Activated CD4-positive, alpha-beta memory T cell treated with anti-CD3 and anti-CD28 coated beads for 36 hours (primary cell): ENCODE measurements at regions of chr2 and their contacts with region 1.

Region 1: GRCh38 chr2:37877457-37878315 is 47.4 kb upstream of the RMDN2 start:
- DNase-seq: no peak
- H3K4me3 Mint-ChIP-seq: no peak overlapping the region
- H3K27ac Mint-ChIP-seq: no peak overlapping the region
- H3K4me1 Mint-ChIP-seq: peaks cover 7% of the 10 kb centered on the region
- H3K27me3 Mint-ChIP-seq: peaks cover 16% of the 10 kb centered on the region

Region 2: DNA sequence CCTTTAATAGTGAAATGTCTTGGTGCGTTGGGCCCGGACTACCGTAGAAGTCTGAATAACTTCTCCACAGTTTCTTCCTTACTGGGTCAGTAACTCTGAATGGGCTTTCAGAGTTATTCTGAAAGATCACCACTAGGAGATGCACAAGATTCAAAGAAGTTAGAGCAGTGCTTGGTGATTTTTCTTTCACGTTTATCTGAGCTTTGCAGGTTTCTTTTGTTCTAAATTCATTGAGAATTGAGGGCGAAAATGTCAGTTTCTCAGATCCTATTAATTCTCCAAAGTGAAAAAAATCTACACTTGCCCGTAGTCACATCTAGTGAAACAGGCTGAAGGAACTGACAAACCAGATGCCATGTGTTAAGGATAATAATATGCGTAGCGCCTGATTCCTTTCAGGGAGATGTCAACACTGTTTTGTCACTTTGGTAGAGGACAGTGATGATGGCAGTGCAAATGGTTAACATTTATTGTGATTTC is 463.2 kb before region 1 on chr2:
- CTCF ChIA-PET with region 1: interaction called, 159 read pairs
- POLR2A ChIA-PET with region 1: no interaction called
- intact Hi-C with region 1: loop called (anchors 1 kb)
- DNase-seq: no peak
- H3K4me3 Mint-ChIP-seq: no peak overlapping the region
- H3K27ac Mint-ChIP-seq: no peak overlapping the region
- H3K4me1 Mint-ChIP-seq: peaks cover 6% of the 10 kb centered on the region
- H3K27me3 Mint-ChIP-seq: no peaks in the 10 kb centered on the region

Region 3: DNA sequence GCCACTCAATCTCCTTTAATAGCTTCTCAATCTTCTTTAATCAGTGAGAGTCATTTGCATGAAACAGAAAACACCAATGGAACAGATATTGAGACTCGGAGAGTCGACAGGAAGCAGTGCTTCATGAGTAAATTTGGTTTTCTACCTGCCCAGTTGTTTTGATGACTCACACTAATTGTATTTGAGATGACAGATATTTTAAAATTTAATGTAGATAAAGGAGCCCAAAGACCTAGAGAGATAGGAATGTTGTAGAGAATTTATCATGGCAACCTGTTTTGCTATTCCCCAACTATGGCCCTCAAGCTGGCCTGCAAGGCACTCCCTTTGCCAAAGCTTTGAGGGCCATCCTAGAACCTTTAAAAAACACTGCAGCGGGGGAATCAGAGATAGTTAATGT is 325.3 kb before region 1 on chr2:
- CTCF ChIA-PET with region 1: interaction called, 5 read pairs
- POLR2A ChIA-PET with region 1: no interaction called
- intact Hi-C with region 1: loop called (anchors 2 kb)
- DNase-seq: no peak
- H3K4me3 Mint-ChIP-seq: no peak overlapping the region
- H3K27ac Mint-ChIP-seq: no peak overlapping the region
- H3K4me1 Mint-ChIP-seq: peaks cover 16% of the 10 kb centered on the region
- H3K27me3 Mint-ChIP-seq: no peaks in the 10 kb centered on the region

Region 4: DNA sequence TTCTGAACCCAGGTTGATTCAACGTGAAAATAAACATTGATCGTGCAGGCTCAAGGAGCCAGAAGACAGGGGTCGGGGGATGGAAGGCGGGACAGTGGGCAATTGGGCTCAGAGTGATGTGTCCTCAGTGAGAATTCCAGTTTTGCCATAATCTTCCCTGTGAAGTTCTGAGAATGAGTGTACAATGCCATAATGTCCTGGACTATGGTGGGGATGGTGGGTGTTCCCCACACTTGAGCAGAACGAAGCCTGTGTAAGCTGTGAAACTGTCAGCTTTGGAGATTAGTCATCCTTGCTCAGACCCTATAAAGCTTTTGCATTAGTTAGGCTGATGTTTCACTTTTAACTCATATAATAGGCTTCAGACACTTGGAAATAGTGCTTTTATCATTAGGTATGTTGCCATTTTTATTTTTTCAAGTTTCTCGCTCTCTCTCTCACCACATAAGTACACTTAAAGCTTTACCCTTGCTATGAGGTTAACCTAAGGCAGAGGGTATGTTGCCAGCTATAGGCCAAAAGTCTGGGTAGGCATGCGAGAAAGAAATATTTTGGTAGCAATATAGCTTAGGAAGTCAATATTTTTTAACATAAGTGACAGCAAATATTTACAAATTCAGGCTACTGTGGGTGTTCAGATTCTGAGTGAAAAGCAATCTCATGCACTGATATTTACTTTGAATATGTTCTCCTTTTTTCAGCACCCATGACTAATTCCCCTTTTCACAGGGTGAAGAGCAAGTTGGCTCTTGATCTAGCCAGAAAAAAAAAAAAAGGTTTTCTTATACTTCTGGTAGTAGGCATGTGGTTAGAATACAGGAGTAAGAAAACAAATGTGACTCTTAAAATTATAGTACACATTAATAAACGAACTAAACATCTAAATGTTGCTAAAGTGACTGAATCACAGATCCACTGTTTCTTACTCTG is 253.4 kb before region 1 on chr2:
- CTCF ChIA-PET with region 1: interaction called, 16 read pairs
- POLR2A ChIA-PET with region 1: no interaction called
- intact Hi-C with region 1: no loop called
- DNase-seq: peak; percentile 50
- H3K4me3 Mint-ChIP-seq: peak overlapping the region; percentile 45
- H3K27ac Mint-ChIP-seq: peak overlapping the region; percentile 83
- H3K4me1 Mint-ChIP-seq: peaks cover 80% of the 10 kb centered on the region
- H3K27me3 Mint-ChIP-seq: no peaks in the 10 kb centered on the region

Region 5: GRCh38 chr2:37832590-37833197 is 45.0 kb before region 1 on chr2:
- CTCF ChIA-PET with region 1: interaction called, 175 read pairs
- POLR2A ChIA-PET with region 1: interaction called, 5 read pairs
- intact Hi-C with region 1: loop called (anchors 1 kb)
- DNase-seq: peak; percentile 86
- H3K4me3 Mint-ChIP-seq: no peak overlapping the region
- H3K27ac Mint-ChIP-seq: no peak overlapping the region
- H3K4me1 Mint-ChIP-seq: peaks cover 30% of the 10 kb centered on the region
- H3K27me3 Mint-ChIP-seq: no peaks in the 10 kb centered on the region

Region 6: DNA sequence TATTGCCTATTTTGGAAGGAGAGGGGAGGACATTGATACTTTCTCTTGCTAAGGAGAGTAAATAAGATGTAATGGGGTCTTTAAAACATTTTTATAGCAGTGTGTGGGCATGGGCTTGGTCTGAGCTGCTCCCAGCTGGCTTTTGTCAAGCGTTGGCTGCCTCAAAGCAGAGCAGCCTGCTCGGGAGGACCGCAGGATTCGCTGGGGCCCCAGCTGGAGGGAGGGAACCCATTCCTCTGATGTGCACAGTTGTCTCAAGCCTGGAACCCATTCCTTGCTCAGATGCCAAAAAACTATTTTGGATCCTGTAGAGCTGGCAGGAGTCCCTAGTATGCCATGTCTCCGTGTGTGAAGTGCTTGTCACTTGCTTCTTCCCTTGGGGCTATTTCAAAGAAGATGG is 12.0 kb before region 1 on chr2:
- CTCF ChIA-PET with region 1: interaction called, 18 read pairs
- POLR2A ChIA-PET with region 1: no interaction called
- intact Hi-C with region 1: no loop called
- DNase-seq: no peak
- H3K4me3 Mint-ChIP-seq: no peak overlapping the region
- H3K27ac Mint-ChIP-seq: no peak overlapping the region
- H3K4me1 Mint-ChIP-seq: no peaks in the 10 kb centered on the region
- H3K27me3 Mint-ChIP-seq: peaks cover 13% of the 10 kb centered on the region